ENCODE measurements at regions of chr11 and their contacts with region 1.

Region 1: DNA sequence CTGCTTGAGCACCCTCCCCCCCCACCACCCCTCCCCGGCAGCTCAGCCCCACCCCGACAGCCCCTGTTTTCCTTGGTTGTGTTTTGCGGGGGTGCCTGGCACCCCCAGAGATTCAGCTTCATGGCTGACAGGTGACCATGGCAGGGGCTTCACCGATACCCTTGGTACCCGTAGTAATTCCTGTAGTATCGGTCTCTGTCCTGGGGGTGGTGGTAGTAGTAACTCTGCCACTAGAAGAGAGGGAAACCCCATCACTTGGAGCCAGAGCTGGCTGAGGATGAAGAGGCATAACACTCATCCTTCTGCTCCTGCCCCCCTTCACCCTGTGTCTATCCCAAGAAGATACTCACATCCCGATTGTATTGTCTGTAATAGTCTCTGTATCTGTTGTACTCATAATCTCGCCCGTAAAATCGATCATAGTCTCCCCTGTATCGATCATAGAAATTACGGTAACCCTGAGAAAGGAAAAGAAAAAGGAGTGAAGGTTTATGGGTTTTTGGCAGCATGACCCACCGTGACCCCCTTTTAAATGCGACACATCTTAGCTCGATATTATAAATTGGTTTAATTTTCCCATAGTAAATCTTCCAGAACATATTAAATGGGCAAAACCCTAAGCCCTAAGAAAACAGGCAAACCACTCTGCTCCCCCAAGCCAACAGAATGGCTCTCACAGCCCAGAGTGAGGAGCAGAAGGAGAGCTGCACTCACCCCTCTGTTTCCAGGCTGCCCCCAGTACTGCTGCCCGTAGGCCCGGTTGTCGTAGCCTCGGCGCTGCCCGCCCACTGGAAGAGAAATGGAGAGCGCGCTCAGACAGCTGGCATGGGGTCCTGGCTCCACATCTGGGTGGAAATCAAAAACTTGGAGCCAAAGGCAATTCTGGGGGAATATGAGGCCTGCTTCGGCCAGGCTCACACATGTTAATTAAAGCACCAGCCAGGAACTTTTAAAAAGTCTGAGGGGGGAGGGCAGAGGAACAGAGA is 8.0 kb downstream of the GNG3 start:
- DNase-seq: no peak
- H3K4me3 ChIP-seq: no peak overlapping the region
- H3K27ac ChIP-seq: no peak overlapping the region
- H3K4me1 ChIP-seq: no peaks in the 10 kb centered on the region
- H3K27me3 ChIP-seq: no peaks in the 10 kb centered on the region
- CTCF ChIP-seq: no peak

Region 2: GRCh38 chr11:62799486-62799885 is 84.0 kb after region 1 on chr11:
- CTCF ChIA-PET with region 1: no interaction called
- dilution Hi-C with region 1: loop called (anchors 5 kb)
- in situ Hi-C with region 1: no loop called
- intact Hi-C with region 1: no loop called
- DNase-seq: no peak
- H3K4me3 ChIP-seq: no peak overlapping the region
- H3K27ac ChIP-seq: no peak overlapping the region
- H3K4me1 ChIP-seq: no peaks in the 10 kb centered on the region
- H3K27me3 ChIP-seq: no peaks in the 10 kb centered on the region
- CTCF ChIP-seq: no peak

Measured in mammary epithelial cell (primary cell).